ENCODE measurements at regions of chrX and their contacts with region 1.

Region 1: GRCh38 chrX:130401415-130402207 is at the start of gene RBMX2:
- DNase-seq: peak; percentile 70 to 84
- H3K4me3 ChIP-seq: peak within 1 kb of the TSS; percentile 83
- H3K27ac ChIP-seq: peak within 1 kb of the TSS; percentile 42
- H3K4me1 ChIP-seq: peaks cover 11% of the 10 kb centered on the region
- H3K27me3 ChIP-seq: peaks cover 14% of the 10 kb centered on the region; the same call in 1 of the 2 replicates
- CTCF ChIP-seq: no peak
- total RNA-seq, gene RBMX2: 39.1 and 53.6 TPM in 2 replicates

Region 2: DNA sequence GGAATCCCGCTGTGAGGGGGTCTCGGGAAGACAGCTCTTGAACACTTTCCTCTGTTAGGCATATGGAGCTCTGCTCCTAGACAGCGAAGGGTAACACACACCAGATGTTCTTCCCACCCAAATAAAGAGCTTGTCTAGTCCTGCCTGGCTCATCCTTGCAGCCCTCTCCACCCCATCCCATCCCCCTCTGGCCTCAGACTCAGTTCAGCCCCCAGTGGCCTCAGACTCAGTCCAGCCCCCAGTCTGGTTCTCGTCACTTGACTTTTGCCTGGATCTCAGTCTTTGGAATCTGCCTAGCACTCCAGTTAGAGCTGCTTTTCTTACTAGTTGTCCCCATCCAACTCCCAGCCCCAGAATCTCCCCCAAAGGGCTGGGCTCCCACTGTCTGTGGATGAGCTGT is 215.0 kb before region 1 on chrX:
- CTCF ChIA-PET with region 1: interaction called, 11 read pairs
- POLR2A ChIA-PET with region 1: no interaction called
- intact Hi-C with region 1: no loop called
- DNase-seq: no peak
- H3K4me3 ChIP-seq: no peak overlapping the region
- H3K27ac ChIP-seq: no peak overlapping the region
- H3K4me1 ChIP-seq: no peaks in the 10 kb centered on the region
- H3K27me3 ChIP-seq: no peaks in the 10 kb centered on the region; the same call in 1 of the 2 replicates
- CTCF ChIP-seq: no peak

Region 3: GRCh38 chrX:130268500-130269170 is 133.0 kb before region 1 on chrX and contains the start of gene ZNF280C:
- CTCF ChIA-PET with region 1: no interaction called
- POLR2A ChIA-PET with region 1: no interaction called
- intact Hi-C with region 1: loop called (anchors 5 kb)
- DNase-seq: peak; percentile 93
- H3K4me3 ChIP-seq: peak within 1 kb of the TSS; percentile 87
- H3K27ac ChIP-seq: peak within 1 kb of the TSS; percentile 74
- H3K4me1 ChIP-seq: peaks cover 37% of the 10 kb centered on the region
- H3K27me3 ChIP-seq: no peaks in the 10 kb centered on the region
- CTCF ChIP-seq: no peak
- total RNA-seq, gene ZNF280C: 5.8 and 7.8 TPM in 2 replicates

Region 4: DNA sequence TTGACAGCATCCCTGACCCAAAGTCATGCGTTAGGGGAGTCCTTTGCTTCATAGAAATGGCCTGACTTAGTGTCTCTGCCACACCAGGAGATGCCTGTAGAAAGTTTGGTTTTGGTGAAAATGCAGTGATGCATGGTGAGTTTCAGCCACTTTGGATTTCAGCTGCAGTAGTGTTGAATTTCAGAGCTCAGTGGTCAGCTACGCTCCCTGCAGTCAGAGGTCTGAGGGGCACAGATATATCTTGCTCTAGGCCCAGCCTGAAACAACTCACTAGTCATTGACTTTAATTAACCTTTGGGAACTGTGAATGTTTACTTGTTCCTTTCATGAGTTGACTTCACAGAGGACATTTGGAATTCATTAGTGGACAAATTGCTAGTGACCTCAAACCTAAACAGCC is 17.7 kb after region 1 on chrX:
- CTCF ChIA-PET with region 1: interaction called, 14 read pairs
- POLR2A ChIA-PET with region 1: no interaction called
- intact Hi-C with region 1: no loop called
- DNase-seq: no peak
- H3K4me3 ChIP-seq: no peak overlapping the region
- H3K27ac ChIP-seq: no peak overlapping the region
- H3K4me1 ChIP-seq: no peaks in the 10 kb centered on the region
- H3K27me3 ChIP-seq: peaks cover 9% of the 10 kb centered on the region; the same call in 1 of the 2 replicates
- CTCF ChIP-seq: no peak

Region 5: DNA sequence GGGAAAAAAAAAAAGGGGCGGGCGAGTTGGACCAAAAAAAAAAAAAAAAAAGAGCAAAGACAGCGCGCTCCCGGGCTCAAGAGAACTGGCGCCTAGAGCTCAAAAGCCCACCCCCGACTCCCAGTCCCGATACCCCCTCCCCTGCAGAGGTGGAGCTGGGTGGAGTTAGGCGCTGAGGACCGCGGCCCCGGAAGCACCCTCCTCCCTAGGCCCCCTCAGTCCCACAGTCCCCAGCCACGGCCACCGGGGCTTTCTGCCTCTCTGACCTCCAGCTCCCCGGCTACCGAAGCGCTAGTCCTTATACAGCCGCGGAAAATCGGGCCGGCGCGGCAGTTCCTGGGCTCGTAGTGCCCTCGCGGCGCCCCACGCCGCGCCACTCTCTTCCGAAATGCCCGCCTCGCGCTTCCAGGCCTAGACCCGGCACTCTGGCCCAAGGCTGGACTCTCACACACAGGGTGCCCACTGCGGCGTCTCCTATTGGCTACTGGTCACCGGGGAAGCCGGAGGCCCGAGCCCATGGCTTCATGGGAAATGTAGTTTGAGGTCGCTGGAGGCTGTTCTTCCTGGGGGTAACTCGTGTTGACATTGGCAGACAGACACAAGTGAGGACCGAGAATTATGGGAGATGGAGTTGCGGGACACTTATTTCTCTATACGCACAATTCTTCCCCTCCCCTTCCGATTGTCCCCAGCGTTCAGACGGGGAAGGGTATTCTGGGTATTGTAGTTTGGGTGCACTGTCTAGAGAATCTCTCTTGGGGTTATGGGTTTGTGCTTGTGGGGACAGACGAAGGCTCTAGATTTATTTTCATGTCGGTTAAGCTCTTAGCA is 501.4 kb after region 1 on chrX and contains the start of gene ENOX2:
- CTCF ChIA-PET with region 1: no interaction called
- POLR2A ChIA-PET with region 1: no interaction called
- intact Hi-C with region 1: loop called (anchors 5 kb)
- DNase-seq: peak; percentile 95 to 98
- H3K4me3 ChIP-seq: peak within 1 kb of the TSS; percentile 76
- H3K27ac ChIP-seq: peak within 1 kb of the TSS; percentile 70
- H3K4me1 ChIP-seq: peaks cover 8% of the 10 kb centered on the region; the same call in 1 of the 2 replicates
- H3K27me3 ChIP-seq: no peaks in the 10 kb centered on the region
- CTCF ChIP-seq: no peak
- total RNA-seq, gene ENOX2: 18.4 and 21.4 TPM in 2 replicates